A673 (cell line): ENCODE measurements at regions of chr4 and their contacts with region 1.

Region 1: GRCh38 chr4:40924096-40924792 is 174.5 kb downstream of the NSUN7 start:
- DNase-seq: peak; percentile 79
- H3K4me3 ChIP-seq: no peak overlapping the region
- H3K27ac ChIP-seq: no peak overlapping the region
- H3K4me1 ChIP-seq: peaks cover 6% of the 10 kb centered on the region
- H3K27me3 ChIP-seq: no peaks in the 10 kb centered on the region
- CTCF ChIP-seq: peak; percentile 95

Region 2: DNA sequence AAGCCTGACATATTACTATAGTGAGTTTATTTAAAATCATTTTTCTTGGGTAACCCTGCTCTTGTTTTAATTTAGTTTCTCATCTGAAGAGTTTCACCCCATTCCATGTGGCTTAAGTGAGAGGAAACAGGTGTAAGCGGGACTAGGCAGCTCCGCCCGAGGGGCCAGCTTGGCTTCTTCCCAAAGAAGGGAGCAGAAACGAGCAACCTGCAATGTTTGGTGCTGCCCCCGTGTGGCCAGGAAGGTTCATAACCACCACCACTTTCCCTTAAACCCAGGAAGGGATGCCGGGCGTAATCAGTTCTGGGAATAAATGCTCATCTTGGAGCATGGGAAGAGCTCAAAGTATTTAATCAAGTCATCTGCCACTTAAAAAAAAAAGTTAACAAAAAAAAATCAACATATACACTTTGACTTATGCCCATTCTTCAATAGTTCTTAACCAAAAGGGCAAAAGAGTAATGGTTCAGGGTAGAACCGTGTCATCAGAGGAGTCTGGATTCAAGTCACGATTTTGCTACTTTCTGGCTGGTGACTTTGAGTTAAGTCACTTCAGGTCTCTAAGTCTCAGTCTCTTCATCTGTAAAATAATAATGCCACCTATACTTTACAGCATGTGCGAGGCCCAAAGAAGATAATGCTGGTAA is 26.6 kb before region 1 on chr4:
- CTCF ChIA-PET with region 1: interaction called, 11 read pairs
- POLR2A ChIA-PET with region 1: no interaction called
- intact Hi-C with region 1: no loop called
- DNase-seq: peak; percentile 89
- H3K4me3 ChIP-seq: peak overlapping the region; percentile 34
- H3K27ac ChIP-seq: no peak overlapping the region
- H3K4me1 ChIP-seq: no peaks in the 10 kb centered on the region
- H3K27me3 ChIP-seq: no peaks in the 10 kb centered on the region
- CTCF ChIP-seq: peak; percentile 87

Region 3: DNA sequence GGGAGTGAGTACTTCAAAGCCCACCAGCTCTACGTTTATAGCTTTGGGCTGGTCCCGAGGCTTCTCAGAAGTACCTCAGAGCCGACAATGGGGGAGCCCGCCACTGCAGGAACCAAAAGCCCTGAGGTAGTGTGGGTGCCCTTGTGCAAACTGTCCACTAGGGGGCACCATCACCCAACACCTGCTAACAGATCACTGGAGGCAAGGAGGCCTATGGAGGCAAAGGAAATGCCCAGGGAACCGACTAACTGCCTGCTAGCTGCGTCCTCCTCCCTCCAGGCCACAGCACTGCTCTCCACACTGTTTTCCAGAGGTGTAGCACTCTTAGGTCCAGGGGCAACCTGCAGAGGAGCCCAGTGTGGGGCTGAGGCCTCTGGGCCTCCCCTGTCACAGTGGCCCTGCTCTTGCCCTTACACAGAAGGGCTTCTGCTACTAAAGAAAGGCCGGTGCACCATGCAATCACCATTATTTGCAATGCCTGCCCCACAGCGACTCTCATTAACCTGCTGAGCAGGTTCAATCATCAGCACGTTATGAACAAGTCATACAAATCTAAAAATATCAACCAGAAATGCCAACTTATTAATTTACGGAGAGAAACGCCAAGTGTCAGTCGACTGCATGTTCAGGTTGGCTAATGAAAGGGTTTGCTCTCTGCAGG is 15.4 kb before region 1 on chr4:
- CTCF ChIA-PET with region 1: interaction called, 19 read pairs
- POLR2A ChIA-PET with region 1: no interaction called
- intact Hi-C with region 1: loop called (anchors 1 kb)
- DNase-seq: peak; percentile 93
- H3K4me3 ChIP-seq: no peak overlapping the region
- H3K27ac ChIP-seq: peak overlapping the region; percentile 44
- H3K4me1 ChIP-seq: peaks cover 17% of the 10 kb centered on the region
- H3K27me3 ChIP-seq: no peaks in the 10 kb centered on the region
- CTCF ChIP-seq: peak; percentile 98

Region 4: DNA sequence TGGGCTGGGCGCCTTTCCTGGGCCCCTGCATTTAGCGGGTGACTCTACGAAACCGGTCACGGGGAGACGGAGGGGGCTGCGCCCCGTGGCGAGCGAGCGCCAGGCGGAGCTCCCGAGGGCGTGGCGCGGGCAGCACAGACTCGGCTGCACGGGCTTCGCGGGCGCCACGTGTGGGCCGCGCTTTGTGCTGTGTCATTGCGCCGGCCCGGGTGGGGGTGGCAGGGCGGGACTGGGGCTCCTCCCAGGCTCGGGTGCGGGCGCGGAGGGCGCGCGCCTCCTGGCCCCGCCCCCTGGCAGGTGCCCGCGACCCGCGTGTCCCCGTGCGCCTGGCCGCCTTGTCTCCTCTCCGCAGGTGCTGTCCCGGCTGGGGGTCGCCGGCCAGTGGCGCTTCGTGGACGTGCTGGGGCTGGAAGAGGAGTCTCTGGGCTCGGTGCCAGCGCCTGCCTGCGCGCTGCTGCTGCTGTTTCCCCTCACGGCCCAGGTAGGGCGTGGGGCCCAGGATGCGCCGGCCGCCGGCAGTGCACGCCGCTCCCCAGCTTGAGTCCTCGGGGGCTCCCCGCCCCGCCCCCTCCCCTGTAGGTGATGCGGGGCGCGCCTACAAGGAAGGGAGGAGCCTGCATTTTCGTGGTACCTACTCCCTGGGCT is 333.1 kb after region 1 on chr4:
- CTCF ChIA-PET with region 1: no interaction called
- POLR2A ChIA-PET with region 1: no interaction called
- intact Hi-C with region 1: loop called (anchors 5 kb)
- DNase-seq: peak; percentile 85
- H3K4me3 ChIP-seq: peak overlapping the region; percentile 93
- H3K27ac ChIP-seq: peak overlapping the region; percentile 95
- H3K4me1 ChIP-seq: peaks cover 22% of the 10 kb centered on the region
- H3K27me3 ChIP-seq: no peaks in the 10 kb centered on the region
- CTCF ChIP-seq: no peak